ENCODE measurements at regions of chr5 and their contacts with region 1.

Region 1: DNA sequence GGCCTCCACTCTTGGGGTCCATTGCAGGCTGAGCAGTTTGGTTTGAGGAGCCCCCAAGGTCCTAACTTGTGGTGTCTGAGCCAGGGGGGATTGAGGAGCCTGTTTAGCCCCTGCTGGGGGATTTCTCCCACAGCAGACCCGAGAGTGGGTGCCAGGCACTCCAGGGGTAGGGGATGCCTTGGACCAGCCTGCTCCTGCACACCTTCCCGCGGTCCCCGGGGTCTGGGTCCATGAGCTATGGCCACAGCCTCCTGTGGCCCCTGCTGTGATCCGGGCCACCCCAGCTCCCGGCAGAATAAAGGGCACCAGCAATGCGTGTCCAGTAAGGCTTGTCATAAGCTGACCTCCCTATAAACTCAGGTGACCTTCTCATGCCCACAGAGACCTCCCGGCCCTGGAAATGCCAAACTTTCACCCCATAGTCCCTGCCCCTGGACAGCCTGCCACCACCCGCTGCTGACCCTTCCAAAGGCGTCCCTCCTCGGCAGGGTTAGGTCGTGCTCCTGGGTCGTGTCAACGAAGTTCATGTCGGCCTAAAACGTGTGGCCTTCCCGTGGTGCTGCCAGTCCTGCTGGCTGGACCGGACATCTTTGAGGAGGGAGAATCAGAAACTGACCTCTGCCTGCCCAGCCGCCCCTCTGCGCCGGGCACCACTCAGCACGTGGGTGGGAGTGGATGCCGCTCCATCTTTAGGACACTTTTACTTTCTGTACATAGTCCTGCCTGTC is 137.6 kb downstream of the MRPL36 start:
- DNase-seq: peak in 2 of 10 donors; percentile 9 to 43

Region 2: GRCh38 chr5:1568201-1568979 is 93.6 kb before region 1 on chr5:
- intact Hi-C with region 1: no loop called
- DNase-seq: peak in 4 of 10 donors; percentile 15 to 87 (median 62)

Region 3: GRCh38 chr5:2038321-2039179 is 376.6 kb after region 1 on chr5:
- intact Hi-C with region 1: loop called (anchors 5 kb)
- DNase-seq: peak; percentile 35 to 95 (median 62)